H1 (cell line): ENCODE measurements at regions of chr19 and their contacts with region 1.

Region 1: GRCh38 chr19:17245244-17245984 is at the start of gene NR2F6:
- DNase-seq: no peak
- H3K4me3 ChIP-seq: peak within 1 kb of the TSS; percentile 68 to 83 (median 78)
- H3K27ac ChIP-seq: peak within 1 kb of the TSS; percentile 92; the same call in 1 of the 2 replicates
- H3K4me1 ChIP-seq: peaks cover 3 to 34% (median 25%) of the 10 kb centered on the region in 4 experiments
- H3K27me3 ChIP-seq: no peaks in the 10 kb centered on the region
- CTCF ChIP-seq: no peak
- EP300 ChIP-seq: no peak
- POLR2A ChIP-seq: no peak
- RAD21 ChIP-seq: no peak
- total RNA-seq, gene NR2F6: 114 and 121 TPM in 2 replicates

Region 2: GRCh38 chr19:17226002-17226933 is 19.1 kb before region 1 on chr19 and contains the start of gene OCEL1:
- CTCF ChIA-PET with region 1: interaction called, 8 read pairs
- POLR2A ChIA-PET with region 1: interaction called, 118 read pairs
- DNase-seq: peak; percentile 89 to 96
- H3K4me3 ChIP-seq: peak within 1 kb of the TSS; percentile 52 to 80 (median 65)
- H3K27ac ChIP-seq: peak within 1 kb of the TSS; percentile 84; the same call in 1 of the 2 replicates
- H3K4me1 ChIP-seq: peaks cover 0 to 4% (median 3%) of the 10 kb centered on the region in 4 experiments; a peak in 6 of 7 replicates
- H3K27me3 ChIP-seq: no peaks in the 10 kb centered on the region
- CTCF ChIP-seq: no peak
- EP300 ChIP-seq: no peak
- POLR2A ChIP-seq: peak; percentile 50 to 86
- RAD21 ChIP-seq: no peak
- total RNA-seq, gene OCEL1: 32.1 and 32.6 TPM in 2 replicates

Region 3: DNA sequence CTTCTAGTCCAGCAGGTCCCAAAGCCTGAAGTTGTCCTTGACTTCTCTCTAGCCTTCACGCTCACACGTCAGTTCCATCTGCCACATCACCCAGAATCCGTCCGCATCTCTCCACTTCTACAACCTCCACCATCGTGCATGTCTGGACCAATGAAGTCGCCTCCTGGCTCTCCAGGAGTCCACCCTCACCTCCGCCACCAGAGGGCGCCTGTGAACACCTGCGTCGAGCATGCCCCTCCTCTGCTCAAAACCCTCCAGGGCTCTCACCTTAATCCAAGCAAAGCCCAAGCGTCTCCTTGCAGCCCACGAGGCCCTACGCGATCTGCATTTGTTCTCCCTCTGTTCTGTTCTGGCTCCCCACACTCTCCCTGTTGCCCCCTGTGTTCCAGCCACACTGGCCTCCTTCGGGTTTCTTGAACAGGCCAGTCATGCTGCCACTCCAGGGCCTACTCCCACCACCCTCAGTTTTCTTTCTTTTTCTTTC is 15.5 kb after region 1 on chr19:
- CTCF ChIA-PET with region 1: interaction called, 35 read pairs
- POLR2A ChIA-PET with region 1: interaction called, 37 read pairs
- DNase-seq: peak; percentile 90 to 95
- H3K4me3 ChIP-seq: no peak overlapping the region
- H3K27ac ChIP-seq: peak overlapping the region; percentile 60; the same call in 1 of the 2 replicates
- H3K4me1 ChIP-seq: peaks cover 0 to 5% (median 1%) of the 10 kb centered on the region in 4 experiments; a peak in 4 of 7 replicates
- H3K27me3 ChIP-seq: no peaks in the 10 kb centered on the region
- CTCF ChIP-seq: peak; percentile 81 to 98 (median 94)
- EP300 ChIP-seq: no peak
- POLR2A ChIP-seq: no peak
- RAD21 ChIP-seq: peak; percentile 53 to 71; a peak in 3 of 4 replicates

Region 4: DNA sequence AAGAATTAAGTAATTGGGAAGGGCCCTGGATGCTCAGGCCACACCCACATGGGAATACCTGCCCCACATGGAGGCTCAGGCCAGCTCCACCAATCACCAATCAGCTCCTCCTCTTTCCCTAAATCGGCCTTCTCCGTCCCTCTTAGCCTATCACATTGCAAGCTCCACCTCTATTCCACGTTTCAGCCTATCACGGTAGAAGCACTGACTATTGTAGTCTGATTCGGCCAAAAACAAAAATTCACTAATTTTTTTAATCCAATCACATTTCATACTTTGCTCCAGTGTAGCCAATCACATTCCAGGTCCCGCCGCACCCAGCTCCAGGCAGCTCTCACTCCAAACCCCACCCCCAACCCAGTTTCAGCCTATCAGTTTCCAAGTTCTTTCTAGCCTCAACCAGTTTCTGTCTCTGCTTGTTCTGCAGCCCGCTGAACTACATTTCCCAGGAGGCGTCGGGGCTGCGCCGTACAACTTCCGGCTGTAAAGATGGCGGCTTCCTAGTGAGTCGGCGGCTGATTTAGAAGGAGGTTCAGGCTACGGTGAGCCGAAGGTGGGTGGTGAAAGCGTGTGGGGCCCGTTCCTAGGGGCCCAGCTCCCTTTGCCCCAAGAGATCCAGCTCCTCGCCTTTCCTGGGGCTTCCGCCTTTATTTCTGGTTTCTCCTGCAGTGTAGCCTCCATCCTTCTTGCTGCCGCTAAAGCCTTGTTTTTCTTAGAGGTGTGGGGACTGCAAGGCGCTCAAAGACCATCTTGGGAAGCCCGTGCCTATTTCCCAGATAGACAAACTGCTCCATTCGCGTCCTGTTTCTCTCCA is 21.8 kb after region 1 on chr19 and contains the start of gene BABAM1:
- CTCF ChIA-PET with region 1: interaction called, 35 read pairs
- POLR2A ChIA-PET with region 1: interaction called, 37 read pairs
- DNase-seq: peak; percentile 88 to 96
- H3K4me3 ChIP-seq: peak within 1 kb of the TSS; percentile 71 to 100 (median 95)
- H3K27ac ChIP-seq: peak within 1 kb of the TSS; percentile 60; the same call in 1 of the 2 replicates
- H3K4me1 ChIP-seq: peaks cover 0 to 8% (median 2%) of the 10 kb centered on the region in 4 experiments; a peak in 5 of 7 replicates
- H3K27me3 ChIP-seq: no peaks in the 10 kb centered on the region
- CTCF ChIP-seq: no peak
- EP300 ChIP-seq: no peak
- POLR2A ChIP-seq: peak; percentile 50 to 94
- RAD21 ChIP-seq: no peak
- total RNA-seq, gene BABAM1: 127 and 134 TPM in 2 replicates